ENCODE measurements at regions of chr7 and their contacts with region 1.

Region 1: DNA sequence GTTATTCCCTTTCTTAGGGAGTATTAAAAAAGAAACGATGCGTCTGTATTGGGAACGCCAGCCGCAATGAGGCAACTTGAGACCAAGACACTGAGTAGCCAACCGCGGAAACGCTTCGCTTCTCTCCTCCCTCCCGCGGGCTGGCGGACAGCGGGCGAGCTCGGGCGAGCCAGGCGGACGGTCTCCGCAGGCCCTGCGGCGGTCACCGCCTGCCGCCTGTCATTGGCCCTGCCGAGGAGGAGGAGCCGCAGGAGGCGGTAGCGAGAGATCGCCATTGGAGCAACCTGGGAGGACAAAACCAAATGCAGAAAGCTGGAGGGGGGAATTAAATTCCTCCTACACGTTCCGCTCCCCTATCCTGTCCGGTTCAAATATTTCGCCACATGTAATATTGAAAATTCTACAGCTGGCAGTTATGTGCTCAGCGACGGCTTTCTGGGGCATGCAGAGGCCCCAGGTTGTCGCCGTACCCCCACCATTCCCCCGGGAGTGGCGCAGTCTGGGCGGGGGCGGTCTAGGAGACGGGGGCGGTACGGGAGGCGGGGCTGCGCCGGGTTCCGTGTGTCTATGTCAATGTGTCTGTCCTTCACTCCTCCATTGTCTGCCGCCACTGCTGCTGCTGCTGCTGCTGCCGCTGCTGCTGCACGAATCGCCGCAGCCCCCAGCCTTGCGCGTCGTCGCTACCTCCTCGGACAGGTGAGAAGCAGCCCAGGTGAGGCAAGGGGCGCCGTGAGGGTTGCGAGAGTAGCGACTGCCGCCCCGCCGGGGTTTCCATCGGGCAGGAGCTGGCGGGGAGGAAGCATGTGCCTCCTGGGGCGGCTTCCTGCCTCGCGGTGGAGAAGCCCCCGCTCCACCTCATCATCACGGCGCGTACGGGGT is at the starts of genes ANKMY2 and BZW2:
- DNase-seq: peak; percentile 86
- ATAC-seq: peak; percentile 86
- H3K4me3 Mint-ChIP-seq: peak within 1 kb of the TSS; percentile 99
- H3K27ac Mint-ChIP-seq: peak within 1 kb of the TSS; percentile 99
- H3K4me1 Mint-ChIP-seq: peaks cover 56% of the 10 kb centered on the region
- H3K27me3 Mint-ChIP-seq: no peaks in the 10 kb centered on the region
- CTCF ChIP-seq: no peak
- total RNA-seq, gene ANKMY2: 9.4 and 11.3 TPM in 2 replicates
- total RNA-seq, gene BZW2: 47.2 and 48.2 TPM in 2 replicates

Region 2: GRCh38 chr7:16420649-16421332 is 225.0 kb before region 1 on chr7:
- CTCF ChIA-PET with region 1: no interaction called
- POLR2A ChIA-PET with region 1: interaction called, 30 read pairs
- intact Hi-C with region 1: loop called (anchors 1 kb)
- DNase-seq: peak; percentile 73
- ATAC-seq: peak; percentile 90
- H3K4me3 Mint-ChIP-seq: peak overlapping the region; percentile 93
- H3K27ac Mint-ChIP-seq: peak overlapping the region; percentile 95
- H3K4me1 Mint-ChIP-seq: peaks cover 22% of the 10 kb centered on the region
- H3K27me3 Mint-ChIP-seq: no peaks in the 10 kb centered on the region
- CTCF ChIP-seq: no peak

Region 3: DNA sequence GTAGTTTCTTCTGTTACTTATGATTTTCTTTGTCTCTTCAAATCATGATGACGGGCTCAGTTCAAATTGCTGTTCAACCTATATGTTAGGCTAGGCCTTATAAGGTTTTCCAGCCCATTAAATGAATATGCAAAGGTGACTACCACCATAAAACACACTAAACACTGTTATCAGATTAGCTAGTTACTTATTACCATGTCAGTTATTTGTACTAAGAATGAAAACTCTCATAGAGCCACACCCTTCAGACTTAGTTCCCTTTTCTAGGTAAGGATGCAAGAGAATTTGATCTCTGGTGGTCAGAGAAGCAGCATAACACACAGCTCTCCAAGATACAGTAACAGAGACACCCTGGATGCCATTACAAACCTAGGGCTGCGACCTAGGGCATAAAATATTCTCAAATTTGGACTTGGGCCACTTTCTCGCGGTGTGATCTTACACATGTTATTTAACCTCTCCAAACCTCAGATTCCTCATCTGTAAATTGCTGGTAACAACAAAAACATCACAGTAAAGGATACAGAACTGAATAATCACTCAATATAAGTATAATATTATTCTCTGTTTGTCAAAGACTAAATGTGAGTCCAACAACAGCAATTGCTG is 35.9 kb before region 1 on chr7:
- CTCF ChIA-PET with region 1: no interaction called
- POLR2A ChIA-PET with region 1: interaction called, 8 read pairs
- intact Hi-C with region 1: loop called (anchors 1 kb)
- DNase-seq: no peak
- ATAC-seq: peak; percentile 92
- H3K4me3 Mint-ChIP-seq: no peak overlapping the region
- H3K27ac Mint-ChIP-seq: peak overlapping the region; percentile 74
- H3K4me1 Mint-ChIP-seq: peaks cover 19% of the 10 kb centered on the region
- H3K27me3 Mint-ChIP-seq: no peaks in the 10 kb centered on the region
- CTCF ChIP-seq: no peak

Region 4: GRCh38 chr7:16660702-16661464 is 15.1 kb after region 1 on chr7:
- CTCF ChIA-PET with region 1: no interaction called
- POLR2A ChIA-PET with region 1: no interaction called
- intact Hi-C with region 1: loop called (anchors 2 kb)
- DNase-seq: no peak
- ATAC-seq: no peak
- H3K4me3 Mint-ChIP-seq: no peak overlapping the region
- H3K27ac Mint-ChIP-seq: no peak overlapping the region
- H3K4me1 Mint-ChIP-seq: peaks cover 17% of the 10 kb centered on the region
- H3K27me3 Mint-ChIP-seq: no peaks in the 10 kb centered on the region
- CTCF ChIP-seq: no peak

Region 5: DNA sequence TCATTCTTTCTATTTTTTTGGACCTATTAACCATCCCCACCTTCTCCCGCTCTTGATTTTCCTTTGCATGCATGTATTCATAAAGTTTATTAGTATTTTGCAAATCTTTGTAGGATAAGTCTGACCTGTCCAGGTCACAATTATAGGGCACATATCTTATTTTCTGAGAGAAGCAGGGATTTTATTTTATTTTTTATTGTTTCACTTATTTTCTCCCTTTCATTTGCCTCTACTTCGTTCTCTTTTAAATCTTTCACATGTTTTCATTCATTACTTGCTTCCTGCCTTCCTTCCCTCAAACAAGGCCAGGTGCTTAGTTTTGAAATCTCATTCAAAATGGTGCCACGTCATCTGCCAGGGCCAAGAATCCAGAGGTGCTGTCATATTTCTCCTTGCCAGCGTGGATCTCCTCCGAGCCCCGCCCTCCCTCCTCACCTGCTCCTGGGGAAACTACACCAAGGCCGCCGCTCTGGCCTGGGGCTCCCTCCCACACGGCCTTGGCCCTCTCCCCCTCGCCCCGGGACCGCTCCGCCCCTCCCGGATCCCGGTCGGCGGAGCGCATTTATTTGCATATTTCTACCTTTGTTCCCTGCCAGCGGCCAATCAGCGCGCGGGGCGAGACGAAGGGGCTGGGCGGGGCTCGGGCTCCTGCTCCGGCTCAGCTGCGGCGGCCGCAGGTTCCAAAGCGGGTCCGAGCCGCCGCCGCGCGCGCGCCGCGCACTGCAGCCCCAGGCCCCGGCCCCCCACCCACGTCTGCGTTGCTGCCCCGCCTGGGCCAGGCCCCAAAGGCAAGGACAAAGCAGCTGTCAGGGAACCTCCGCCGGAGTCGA is 107.5 kb after region 1 on chr7 and contains the start of gene TSPAN13:
- CTCF ChIA-PET with region 1: no interaction called
- POLR2A ChIA-PET with region 1: interaction called, 19 read pairs
- intact Hi-C with region 1: loop called (anchors 1 kb)
- DNase-seq: peak; percentile 80
- ATAC-seq: peak; percentile 88
- H3K4me3 Mint-ChIP-seq: peak within 1 kb of the TSS; percentile 88
- H3K27ac Mint-ChIP-seq: peak within 1 kb of the TSS; percentile 84
- H3K4me1 Mint-ChIP-seq: peaks cover 45% of the 10 kb centered on the region
- H3K27me3 Mint-ChIP-seq: no peaks in the 10 kb centered on the region
- CTCF ChIP-seq: no peak
- total RNA-seq, gene TSPAN13: 15.1 and 17.8 TPM in 2 replicates

Region 6: GRCh38 chr7:17234398-17235031 is 588.7 kb after region 1 on chr7:
- CTCF ChIA-PET with region 1: no interaction called
- POLR2A ChIA-PET with region 1: no interaction called
- intact Hi-C with region 1: loop called (anchors 5 kb)
- DNase-seq: peak; percentile 17
- ATAC-seq: peak; percentile 86
- H3K4me3 Mint-ChIP-seq: peak overlapping the region; percentile 77
- H3K27ac Mint-ChIP-seq: peak overlapping the region; percentile 98
- H3K4me1 Mint-ChIP-seq: peaks cover 29% of the 10 kb centered on the region
- H3K27me3 Mint-ChIP-seq: no peaks in the 10 kb centered on the region
- CTCF ChIP-seq: no peak

Region 7: GRCh38 chr7:18345641-18346234 is 1699.9 kb after region 1 on chr7:
- CTCF ChIA-PET with region 1: no interaction called
- POLR2A ChIA-PET with region 1: no interaction called
- intact Hi-C with region 1: loop called (anchors 5 kb)
- DNase-seq: no peak
- ATAC-seq: peak; percentile 60
- H3K4me3 Mint-ChIP-seq: no peak overlapping the region
- H3K27ac Mint-ChIP-seq: no peak overlapping the region
- H3K4me1 Mint-ChIP-seq: peaks cover 47% of the 10 kb centered on the region
- H3K27me3 Mint-ChIP-seq: no peaks in the 10 kb centered on the region
- CTCF ChIP-seq: peak; percentile 62

Measured in activated B cell treated with CpG ODN at 0.5 μM for 24 hours (primary cell).